HEK293T (cell line): ENCODE measurements at regions of chr2 and their contacts with region 1.

Region 1: DNA sequence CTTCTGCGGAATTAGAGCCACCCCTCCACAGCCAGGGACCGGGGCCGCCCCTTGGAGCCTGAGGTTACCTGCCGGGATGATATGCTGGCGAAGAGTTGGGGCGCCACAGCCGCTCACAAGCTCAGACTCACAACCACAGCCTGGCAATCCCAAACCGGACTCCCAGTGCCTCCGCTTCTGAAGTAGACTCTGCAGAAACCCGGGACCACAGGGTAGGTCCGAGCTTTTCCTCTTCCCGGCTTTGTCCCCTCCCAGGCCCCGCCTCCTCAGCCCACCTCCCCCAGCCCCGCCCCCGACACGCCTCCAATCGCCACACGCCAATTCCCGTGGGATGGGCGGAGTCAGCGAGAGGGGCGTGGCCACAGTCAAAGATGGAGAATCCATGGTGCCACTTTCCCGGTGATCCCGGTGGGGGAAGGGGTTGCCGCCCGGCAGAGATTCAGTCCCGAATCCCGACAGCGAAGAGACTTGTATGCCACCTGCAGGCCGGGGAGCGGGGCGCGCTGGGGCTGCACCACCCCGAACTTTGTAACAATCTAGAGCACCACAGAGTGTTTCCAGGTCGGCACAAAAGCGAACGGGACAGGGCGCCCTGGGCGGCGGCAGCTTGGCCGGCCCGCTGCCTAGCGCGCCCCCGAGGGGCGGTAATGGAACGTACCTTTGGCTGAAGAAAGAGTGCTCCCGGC is at the start of gene IDH1:
- DNase-seq: peak; percentile 94

Region 2: DNA sequence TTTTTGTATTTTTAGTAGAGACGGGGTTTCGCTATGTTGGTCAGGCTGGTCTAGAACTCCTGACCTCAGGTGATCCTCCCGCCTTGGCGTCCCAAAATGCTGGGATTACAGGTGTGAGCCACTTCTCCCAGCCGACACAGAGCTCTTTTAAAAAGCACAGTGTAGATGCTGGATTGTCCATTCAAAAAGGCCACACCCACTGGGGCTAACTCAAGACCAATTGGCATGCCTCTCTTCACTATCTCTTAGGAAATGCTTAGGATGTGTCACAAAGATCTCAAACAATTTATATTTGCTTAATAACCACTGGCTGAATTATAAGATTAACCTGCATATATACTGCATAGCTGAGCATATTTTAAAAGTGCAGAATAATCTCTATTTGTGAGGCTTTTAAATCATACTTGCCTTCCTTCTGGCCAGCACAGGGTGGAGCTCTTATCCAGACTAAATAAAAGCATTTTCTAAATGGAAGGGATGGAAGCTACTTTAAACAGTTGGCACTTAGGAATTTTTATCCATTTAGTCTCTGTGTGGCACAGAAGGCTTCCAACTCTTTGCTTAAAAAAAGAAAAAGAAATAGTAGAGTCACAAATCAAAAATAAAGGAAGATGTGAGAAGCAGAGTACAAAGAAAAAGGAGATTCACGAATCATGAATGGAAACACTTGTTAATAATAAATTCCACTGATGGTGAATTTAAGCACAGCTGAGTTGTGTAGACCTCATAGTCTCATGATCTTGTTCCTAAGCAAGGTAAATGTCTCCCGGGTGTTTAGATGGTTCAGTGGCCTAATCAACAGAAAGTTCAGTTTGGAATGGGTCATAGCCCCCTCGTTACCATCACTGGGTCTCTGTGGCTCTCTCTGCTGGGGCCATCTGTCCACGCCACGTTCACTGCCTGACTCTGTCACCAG is 153.0 kb before region 1 on chr2:
- CTCF ChIA-PET with region 1: interaction called, 15 read pairs
- POLR2A ChIA-PET with region 1: no interaction called
- DNase-seq: no peak

Region 3: DNA sequence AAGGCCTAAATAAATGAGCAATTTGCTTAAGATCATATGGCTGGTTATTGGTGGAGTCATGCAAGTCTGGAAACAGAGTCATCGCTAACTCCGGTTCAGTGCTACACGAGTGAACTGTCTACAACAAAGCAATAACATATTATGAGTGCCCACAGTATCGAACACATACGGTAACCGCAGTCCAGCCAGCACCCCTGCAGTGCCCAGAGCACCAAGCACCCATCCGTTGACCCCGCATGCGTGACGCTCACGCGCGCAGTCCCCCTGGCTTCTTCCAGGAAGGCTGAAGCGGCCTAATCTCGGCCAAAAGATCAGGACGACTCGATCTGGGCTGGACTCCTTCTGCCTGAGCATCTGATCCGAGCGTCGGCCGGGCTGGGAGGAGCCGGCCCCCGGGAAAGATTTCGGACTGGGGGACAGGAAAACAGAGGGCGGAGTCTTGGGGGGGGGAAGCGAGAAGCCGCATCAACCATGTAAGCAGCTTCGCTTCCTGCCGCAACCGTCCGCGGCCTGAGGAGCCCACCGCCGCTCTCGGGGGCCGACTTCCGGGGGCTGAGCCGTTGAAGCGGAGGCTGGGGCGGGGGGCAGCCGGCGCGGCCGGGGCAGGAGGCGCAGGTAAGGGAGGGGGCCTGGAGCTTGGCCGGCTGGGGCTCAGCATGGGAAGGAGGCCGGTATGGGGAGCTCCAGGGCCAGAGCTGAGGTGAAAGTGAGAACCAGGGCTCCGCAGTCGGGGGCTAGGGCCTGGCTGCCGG is 11.0 kb after region 1 on chr2 and contains the start of gene PIKFYVE:
- CTCF ChIA-PET with region 1: interaction called, 5 read pairs
- POLR2A ChIA-PET with region 1: interaction called, 20 read pairs
- DNase-seq: peak; percentile 89

Region 4: GRCh38 chr2:208294482-208295024 is 39.5 kb after region 1 on chr2:
- CTCF ChIA-PET with region 1: no interaction called
- POLR2A ChIA-PET with region 1: no interaction called
- DNase-seq: no peak